Heart right ventricle (tissue), 16 donors: ENCODE measurements at regions of chr12 and their contacts with region 1.

Region 1: DNA sequence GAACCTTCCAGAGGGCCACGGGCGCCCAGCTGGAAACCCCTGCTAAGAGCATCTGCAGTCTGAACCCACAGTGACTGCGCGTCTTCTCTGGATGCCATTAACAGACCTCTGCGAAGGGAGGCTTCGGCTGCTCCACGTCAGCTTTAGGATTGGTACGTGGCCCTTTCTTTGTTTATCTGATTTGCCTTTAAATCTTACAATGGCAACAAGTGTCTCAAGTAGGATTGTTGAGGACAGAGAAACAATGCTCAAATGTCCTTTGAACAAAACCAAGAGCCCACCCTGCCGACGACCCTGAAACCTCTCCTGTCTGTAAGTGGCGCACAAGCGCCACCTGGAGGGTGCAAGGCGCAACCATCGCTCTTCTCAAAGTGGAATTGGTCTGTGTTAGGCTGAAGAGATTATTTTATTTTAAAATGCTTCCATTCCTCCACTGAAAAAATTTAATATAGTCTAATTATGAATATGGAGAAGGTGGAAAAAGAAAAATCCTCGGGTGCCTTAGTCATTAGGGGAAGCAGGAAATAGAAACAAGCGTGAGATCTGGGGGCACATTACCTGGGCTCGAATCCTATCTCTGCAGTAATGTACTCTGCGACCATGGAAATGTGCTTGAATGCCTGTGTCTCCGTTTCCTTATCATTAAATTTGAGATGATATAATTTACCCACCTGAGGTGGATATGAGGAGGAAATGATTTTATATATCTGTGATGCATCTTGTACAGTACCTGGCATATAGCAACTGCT is 82.6 kb upstream of the PTPRB start:
- DNase-seq: peak; percentile 42 to 54
- ATAC-seq: peak; percentile 60 to 87 (median 71)
- H3K4me3 ChIP-seq: peak overlapping the region in 8 of 10 donors; percentile 11 to 48 (median 42)
- H3K27ac ChIP-seq: peak overlapping the region in 9 of 10 donors; percentile 19 to 77 (median 62)
- H3K4me1 ChIP-seq: peaks cover 0 to 58% (median 23%) of the 10 kb centered on the region in 9 donors
- H3K27me3 ChIP-seq: peaks cover 0 to 5% (median 0%) of the 10 kb centered on the region in 7 donors
- CTCF ChIP-seq: peak; percentile 76 to 97 (median 95)

Region 2: DNA sequence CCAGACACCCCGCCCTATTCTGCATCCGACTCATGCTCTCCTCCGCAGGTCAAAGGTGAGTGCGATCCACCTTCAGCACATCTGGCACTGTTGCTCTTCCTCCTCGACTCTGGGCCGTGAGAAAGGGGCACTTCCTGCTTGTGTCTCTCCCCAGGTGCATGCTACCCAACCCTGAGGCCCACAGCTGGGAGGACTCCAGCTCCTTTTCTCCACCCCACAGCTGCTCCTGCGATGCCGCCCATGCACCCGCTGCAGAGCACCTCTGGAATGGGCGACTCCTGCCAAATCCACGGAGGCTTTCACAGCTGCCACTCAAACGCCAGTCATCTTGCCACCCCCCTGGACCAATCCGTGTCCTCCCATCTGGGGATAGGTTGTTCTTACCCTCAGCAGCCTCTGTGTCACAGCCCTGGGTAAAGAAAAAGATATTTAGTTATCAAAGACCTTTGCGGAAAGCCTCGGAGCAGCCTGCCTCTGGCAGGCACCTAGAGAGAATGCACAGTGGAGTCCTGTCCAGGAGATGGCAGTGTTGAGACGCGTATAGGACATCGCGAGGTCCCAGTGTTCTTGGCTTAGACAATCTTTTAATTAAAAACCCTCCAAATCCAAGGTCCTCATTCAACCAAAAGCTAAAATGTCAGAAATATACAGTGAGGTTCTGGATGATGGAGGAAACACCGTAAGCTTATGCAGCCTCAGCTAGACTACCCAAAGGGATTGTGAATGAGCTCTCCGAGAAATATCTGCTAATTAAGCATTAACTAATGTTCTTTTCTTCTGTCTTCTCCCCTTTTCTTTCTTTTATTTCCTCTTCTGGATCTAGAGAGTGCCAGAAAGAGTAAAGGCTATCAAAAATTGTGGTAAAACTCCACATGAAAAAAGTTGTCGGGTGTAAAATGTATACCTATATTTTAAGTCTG is 840.5 kb before region 1 on chr12:
- intact Hi-C with region 1: loop called in 2 of 10 experiments (anchors 5 to 10 kb)
- DNase-seq: peak; percentile 45 to 73
- ATAC-seq: peak; percentile 82 to 95 (median 94)
- H3K4me3 ChIP-seq: peak overlapping the region in 6 of 10 donors; percentile 16 to 33 (median 24)
- H3K27ac ChIP-seq: no peak overlapping the region
- H3K4me1 ChIP-seq: peaks cover 0 to 10% (median 4%) of the 10 kb centered on the region in 9 donors
- H3K27me3 ChIP-seq: no peaks in the 10 kb centered on the region
- CTCF ChIP-seq: peak; percentile 78 to 97 (median 90)

Region 3: DNA sequence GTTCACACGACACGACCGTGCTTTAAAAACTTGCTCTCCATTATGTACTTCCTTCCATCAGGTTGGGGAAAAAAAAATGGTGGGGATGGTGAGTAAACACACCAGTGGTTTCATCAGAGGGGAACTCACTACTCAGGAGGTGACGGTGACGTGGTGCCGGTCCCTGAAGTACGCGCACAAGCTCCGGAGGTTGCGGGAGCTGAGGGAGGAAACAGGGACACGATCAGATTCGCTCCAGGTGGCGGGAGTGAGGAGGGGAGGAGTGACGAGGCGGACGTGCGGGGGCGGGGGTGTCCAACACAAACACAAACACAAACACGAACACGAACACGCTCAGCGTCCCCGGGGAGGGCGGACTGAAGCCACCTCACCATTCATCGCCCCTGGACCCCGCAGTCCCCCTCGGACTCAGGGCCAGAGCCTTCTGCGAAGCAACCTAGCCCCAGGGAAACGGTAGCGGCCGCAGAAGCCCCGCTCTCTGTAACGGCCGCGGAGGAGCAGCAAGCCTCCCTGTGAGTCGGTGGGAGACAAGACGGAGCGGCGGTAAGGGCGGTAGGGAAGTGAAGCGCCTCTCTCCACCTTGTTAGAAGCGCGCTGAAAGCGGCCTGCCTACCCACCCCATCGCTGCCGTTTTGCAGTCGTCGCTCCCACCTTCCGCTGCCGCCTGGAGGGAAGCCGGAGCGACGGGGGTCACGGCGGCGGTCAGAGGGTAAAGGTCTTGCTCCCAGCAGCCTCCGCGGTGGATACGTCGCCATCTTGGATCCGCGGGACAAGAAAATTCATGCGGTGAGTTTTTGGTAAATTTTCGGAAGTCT is 476.9 kb before region 1 on chr12 and contains the start of gene CNOT2:
- intact Hi-C with region 1: loop called in 2 of 10 experiments (anchors 5 kb)
- DNase-seq: peak; percentile 90 to 92
- ATAC-seq: peak; percentile 96 to 99 (median 97)
- H3K4me3 ChIP-seq: peak within 1 kb of the TSS; percentile 65 to 96 (median 88)
- H3K27ac ChIP-seq: peak within 1 kb of the TSS; percentile 89 to 99 (median 96)
- H3K4me1 ChIP-seq: peaks cover 7 to 61% (median 43%) of the 10 kb centered on the region in 9 donors
- H3K27me3 ChIP-seq: no peaks in the 10 kb centered on the region
- CTCF ChIP-seq: peak in 1 of 9 donors; percentile 14
- total RNA-seq, gene CNOT2: 29.7 to 43.0 (median 36.4) TPM

Region 4: GRCh38 chr12:70535896-70536374 is 183.9 kb before region 1 on chr12:
- intact Hi-C with region 1: loop called in 2 of 10 experiments (anchors 1 to 5 kb)
- DNase-seq: peak in 1 of 2 donors; percentile 25
- ATAC-seq: peak; percentile 59 to 86 (median 72)
- H3K4me3 ChIP-seq: no peak overlapping the region
- H3K27ac ChIP-seq: peak overlapping the region; percentile 27 to 83 (median 70)
- H3K4me1 ChIP-seq: peaks cover 0 to 36% (median 5%) of the 10 kb centered on the region in 9 donors
- H3K27me3 ChIP-seq: no peaks in the 10 kb centered on the region
- CTCF ChIP-seq: no peak

Region 5: GRCh38 chr12:70645494-70646317 is 74.1 kb before region 1 on chr12:
- intact Hi-C with region 1: loop called in 1 of 10 experiments (anchors 5 kb)
- DNase-seq: peak; percentile 41 to 67
- ATAC-seq: peak; percentile 84 to 96 (median 95)
- H3K4me3 ChIP-seq: peak overlapping the region in 2 of 10 donors; percentile 16 to 19
- H3K27ac ChIP-seq: peak overlapping the region; percentile 0 to 85 (median 56)
- H3K4me1 ChIP-seq: peaks cover 6 to 67% (median 43%) of the 10 kb centered on the region in 9 donors
- H3K27me3 ChIP-seq: no peaks in the 10 kb centered on the region
- CTCF ChIP-seq: no peak

Region 6: DNA sequence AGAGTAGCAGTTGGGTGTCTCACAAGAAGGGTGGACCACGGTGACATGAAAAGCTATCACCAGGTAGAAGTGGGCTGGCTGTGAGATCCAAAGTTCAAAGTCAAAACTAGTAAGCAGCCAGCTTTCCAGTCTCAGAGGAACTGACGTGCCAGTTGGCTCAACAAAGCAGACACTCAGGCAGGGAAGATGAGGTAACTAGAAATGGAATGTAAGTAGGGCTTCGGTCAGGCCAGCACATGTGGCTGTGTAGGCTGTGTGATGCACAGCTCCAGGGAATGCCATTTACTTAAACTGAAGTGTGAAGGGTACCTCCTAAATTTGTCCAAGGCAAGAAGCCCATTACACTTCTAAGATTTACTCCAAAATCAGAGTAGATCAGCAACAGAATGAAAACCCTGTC is 157.1 kb after region 1 on chr12:
- intact Hi-C with region 1: no loop called
- DNase-seq: no peak
- ATAC-seq: peak in 1 of 8 donors; percentile 47
- H3K4me3 ChIP-seq: no peak overlapping the region
- H3K27ac ChIP-seq: no peak overlapping the region
- H3K4me1 ChIP-seq: no peaks in the 10 kb centered on the region
- H3K27me3 ChIP-seq: no peaks in the 10 kb centered on the region
- CTCF ChIP-seq: no peak